ENCODE measurements at regions of chr15 and their contacts with region 1.

Region 1: DNA sequence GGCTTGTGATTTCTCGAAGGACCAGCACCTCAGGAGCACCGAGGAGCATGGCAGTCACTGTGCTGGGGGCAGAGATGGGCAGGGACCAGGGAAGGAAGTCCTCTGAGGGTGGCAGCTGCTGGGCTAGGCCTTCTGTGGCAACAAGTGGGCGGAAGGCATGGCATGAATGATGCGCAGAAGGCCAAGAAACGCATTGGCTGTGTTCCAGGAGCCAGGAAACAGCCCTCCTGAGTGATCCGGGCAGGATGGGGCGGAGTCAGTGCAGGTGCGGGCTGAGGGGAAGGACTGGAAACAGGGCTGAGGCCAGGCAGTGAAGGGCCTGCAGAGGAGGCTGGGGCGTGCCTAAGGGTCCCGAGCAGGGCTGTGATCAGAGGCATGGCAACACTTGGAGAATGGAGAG is 23.6 kb downstream of the MRPS11 start:
- DNase-seq: no peak
- H3K4me3 ChIP-seq: no peak overlapping the region
- H3K27ac ChIP-seq: no peak overlapping the region
- H3K4me1 ChIP-seq: peaks cover 0 to 11% (median 0%) of the 10 kb centered on the region in 4 experiments; a peak in 2 of 7 replicates
- H3K27me3 ChIP-seq: no peaks in the 10 kb centered on the region; a peak in 1 of 7 replicates
- CTCF ChIP-seq: no peak
- EP300 ChIP-seq: no peak
- POLR2A ChIP-seq: no peak
- RAD21 ChIP-seq: no peak

Region 2: DNA sequence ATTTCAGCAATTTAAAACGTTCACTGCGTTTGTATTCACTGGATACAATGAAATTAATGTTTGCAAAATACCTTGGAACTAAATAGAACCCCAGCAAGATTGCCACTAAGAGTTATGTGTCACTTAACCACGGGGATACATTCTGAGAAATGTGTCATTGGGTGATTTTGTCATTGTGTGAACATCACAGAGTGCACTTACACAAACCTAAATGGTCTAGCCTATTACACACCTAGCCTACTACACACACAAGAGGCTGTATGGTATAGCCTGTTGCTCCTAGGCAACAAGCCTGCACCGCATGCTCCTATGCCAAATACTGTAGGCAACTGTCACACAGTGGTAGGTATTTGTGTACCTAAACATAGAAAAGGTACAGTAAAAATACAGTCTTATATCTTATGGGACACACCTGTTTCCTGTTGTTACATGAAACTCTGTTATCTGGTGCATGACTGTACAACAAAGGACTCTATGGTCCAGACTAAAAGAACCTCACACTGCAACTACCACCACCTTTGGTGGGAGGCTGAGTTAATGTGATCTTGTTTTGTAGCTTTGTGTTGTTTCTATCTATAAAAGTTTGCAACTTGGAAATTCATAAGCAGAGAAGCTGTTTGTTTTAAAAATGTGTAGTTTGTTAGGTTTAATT is 142.5 kb before region 1 on chr15:
- CTCF ChIA-PET with region 1: no interaction called
- POLR2A ChIA-PET with region 1: no interaction called
- DNase-seq: no peak
- H3K4me3 ChIP-seq: no peak overlapping the region
- H3K27ac ChIP-seq: no peak overlapping the region
- H3K4me1 ChIP-seq: no peaks in the 10 kb centered on the region
- H3K27me3 ChIP-seq: no peaks in the 10 kb centered on the region
- CTCF ChIP-seq: no peak
- EP300 ChIP-seq: no peak
- POLR2A ChIP-seq: no peak
- RAD21 ChIP-seq: no peak

Region 3: DNA sequence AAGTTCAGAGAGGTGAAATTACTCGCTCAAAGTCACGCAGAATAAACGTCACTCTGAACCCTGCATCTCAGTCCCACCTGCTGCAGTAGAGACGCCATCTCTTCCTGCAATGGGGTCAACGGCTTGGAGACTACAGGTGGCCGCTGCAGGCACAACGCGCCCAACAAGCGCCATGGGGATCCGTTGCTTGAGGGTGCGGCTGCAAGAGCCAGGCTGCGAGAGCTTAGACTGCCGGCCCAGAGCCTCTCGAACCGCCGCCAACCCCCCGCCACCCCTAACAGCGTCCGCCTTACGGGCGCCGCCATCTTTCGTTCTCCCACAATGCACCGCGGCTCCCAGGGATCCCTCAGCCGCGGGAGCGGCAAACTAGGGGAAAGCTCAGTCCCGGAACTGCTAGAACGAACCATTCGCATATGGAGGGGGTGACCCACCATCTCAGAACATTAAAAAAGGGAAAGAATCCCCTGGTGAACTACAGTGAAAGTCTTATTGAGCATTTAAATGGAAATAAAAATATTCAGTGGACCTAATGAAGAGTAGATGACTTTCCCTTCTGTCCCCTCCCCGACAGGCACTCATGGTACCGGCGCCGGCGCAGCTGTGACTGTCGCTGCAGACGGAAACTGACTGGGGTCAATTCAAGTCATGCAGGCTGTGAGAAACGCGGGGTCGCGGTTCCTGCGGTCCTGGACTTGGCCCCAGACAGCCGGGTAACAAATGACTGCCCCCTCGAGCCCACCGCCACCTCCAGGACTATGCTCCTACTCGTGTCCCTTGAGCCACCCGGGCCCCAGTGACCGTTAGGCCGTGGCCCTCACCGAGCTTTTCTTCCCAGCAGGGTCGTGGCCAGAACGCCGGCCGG is 23.9 kb before region 1 on chr15 and contains the starts of genes MRPL46 and MRPS11:
- CTCF ChIA-PET with region 1: interaction called, 13 read pairs
- POLR2A ChIA-PET with region 1: no interaction called
- DNase-seq: peak in 1 of 2 experiments; percentile 95
- H3K4me3 ChIP-seq: peak within 1 kb of the TSS; percentile 69 to 98 (median 88)
- H3K27ac ChIP-seq: peak within 1 kb of the TSS; percentile 95
- H3K4me1 ChIP-seq: no peaks in the 10 kb centered on the region; a peak in 1 of 7 replicates
- H3K27me3 ChIP-seq: no peaks in the 10 kb centered on the region
- CTCF ChIP-seq: no peak
- EP300 ChIP-seq: peak in 1 of 2 experiments; percentile 100; a peak in 2 of 3 replicates
- POLR2A ChIP-seq: peak; percentile 87 to 96
- RAD21 ChIP-seq: no peak
- total RNA-seq, gene MRPL46: 24.4 and 24.5 TPM in 2 replicates
- total RNA-seq, gene MRPS11: 41.4 and 50.4 TPM in 2 replicates

Region 4: DNA sequence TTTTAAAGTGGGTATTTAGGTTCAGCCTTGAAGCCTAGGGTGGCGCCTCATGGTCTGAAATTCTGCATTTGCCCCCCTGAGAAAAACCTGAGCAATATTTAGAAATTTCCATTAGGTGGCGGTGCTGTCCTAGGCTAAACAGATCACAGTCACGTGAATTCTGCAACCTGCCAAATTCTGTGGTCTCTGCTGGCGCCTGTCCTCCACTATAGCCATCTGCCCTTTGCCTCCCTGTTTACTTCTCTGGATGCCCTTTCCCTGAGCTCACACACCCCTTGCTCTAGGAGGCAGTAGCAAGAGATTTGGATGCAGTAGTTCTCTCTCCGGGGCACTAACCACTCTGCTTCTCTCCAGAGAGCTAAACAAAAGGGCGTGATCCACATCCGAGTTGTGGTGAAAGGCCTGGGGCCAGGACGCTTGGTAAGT is 14.5 kb before region 1 on chr15:
- CTCF ChIA-PET with region 1: interaction called, 32 read pairs
- POLR2A ChIA-PET with region 1: interaction called, 7 read pairs
- DNase-seq: no peak
- H3K4me3 ChIP-seq: no peak overlapping the region
- H3K27ac ChIP-seq: no peak overlapping the region
- H3K4me1 ChIP-seq: no peaks in the 10 kb centered on the region
- H3K27me3 ChIP-seq: no peaks in the 10 kb centered on the region
- CTCF ChIP-seq: peak; percentile 11 to 81 (median 70)
- EP300 ChIP-seq: no peak
- POLR2A ChIP-seq: no peak
- RAD21 ChIP-seq: peak; percentile 90 to 92

Region 5: DNA sequence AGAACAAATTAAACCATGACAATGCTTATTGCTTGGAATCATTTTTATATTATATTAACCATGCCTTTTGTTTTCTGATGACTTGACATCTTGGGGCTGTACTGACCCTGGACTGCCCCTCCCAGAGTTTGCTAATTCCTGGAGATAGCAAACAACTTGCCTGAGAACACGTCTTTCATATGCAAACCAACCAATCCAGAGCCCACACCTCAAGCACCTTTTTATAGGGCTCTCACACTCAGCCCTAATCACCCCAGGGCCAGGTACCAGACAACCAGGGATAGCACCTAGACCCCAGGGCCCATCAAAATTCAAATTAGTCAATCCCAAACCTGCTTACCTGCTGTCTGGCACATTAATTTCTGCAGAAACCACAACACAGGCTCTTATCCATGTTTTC is 13.3 kb after region 1 on chr15:
- CTCF ChIA-PET with region 1: interaction called, 12 read pairs
- POLR2A ChIA-PET with region 1: interaction called, 4 read pairs
- DNase-seq: no peak
- H3K4me3 ChIP-seq: no peak overlapping the region
- H3K27ac ChIP-seq: no peak overlapping the region
- H3K4me1 ChIP-seq: peaks cover 2 to 11% (median 9%) of the 10 kb centered on the region in 4 experiments; a peak in 4 of 7 replicates
- H3K27me3 ChIP-seq: peaks cover 0 to 2% (median 0%) of the 10 kb centered on the region in 4 experiments; a peak in 2 of 7 replicates
- CTCF ChIP-seq: no peak
- EP300 ChIP-seq: no peak
- POLR2A ChIP-seq: no peak
- RAD21 ChIP-seq: no peak